B cell (primary cell): ENCODE measurements at regions of chr6 and their contacts with region 1.

Region 1: GRCh38 chr6:69866770-69867638 is 648 bp downstream of the COL19A1 start:
- DNase-seq: peak; percentile 92
- ATAC-seq: peak; percentile 78
- H3K4me3 ChIP-seq: peak overlapping the region; percentile 52 to 88 (median 78)
- H3K4me3 Mint-ChIP-seq: peak overlapping the region; percentile 93
- H3K27ac ChIP-seq: peak overlapping the region; percentile 91 to 96
- H3K27ac Mint-ChIP-seq: peak overlapping the region; percentile 95
- H3K4me1 ChIP-seq: peaks cover 36 to 55% of the 10 kb centered on the region in 2 donors
- H3K4me1 Mint-ChIP-seq: peaks cover 65% of the 10 kb centered on the region
- H3K27me3 ChIP-seq: no peaks in the 10 kb centered on the region
- H3K27me3 Mint-ChIP-seq: no peaks in the 10 kb centered on the region
- CTCF ChIP-seq: peak; percentile 65

Region 2: GRCh38 chr6:69732640-69733039 is 134.4 kb before region 1 on chr6:
- CTCF ChIA-PET with region 1: interaction called, 13 read pairs
- POLR2A ChIA-PET with region 1: no interaction called
- intact Hi-C with region 1: loop called (anchors 10 kb)
- DNase-seq: peak; percentile 44
- ATAC-seq: peak; percentile 45
- H3K4me3 ChIP-seq: no peak overlapping the region
- H3K4me3 Mint-ChIP-seq: no peak overlapping the region
- H3K27ac ChIP-seq: peak overlapping the region in 1 of 2 donors; percentile 34
- H3K27ac Mint-ChIP-seq: no peak overlapping the region
- H3K4me1 ChIP-seq: no peaks in the 10 kb centered on the region
- H3K4me1 Mint-ChIP-seq: peaks cover 16% of the 10 kb centered on the region
- H3K27me3 ChIP-seq: no peaks in the 10 kb centered on the region
- H3K27me3 Mint-ChIP-seq: no peaks in the 10 kb centered on the region
- CTCF ChIP-seq: peak; percentile 61

Region 3: DNA sequence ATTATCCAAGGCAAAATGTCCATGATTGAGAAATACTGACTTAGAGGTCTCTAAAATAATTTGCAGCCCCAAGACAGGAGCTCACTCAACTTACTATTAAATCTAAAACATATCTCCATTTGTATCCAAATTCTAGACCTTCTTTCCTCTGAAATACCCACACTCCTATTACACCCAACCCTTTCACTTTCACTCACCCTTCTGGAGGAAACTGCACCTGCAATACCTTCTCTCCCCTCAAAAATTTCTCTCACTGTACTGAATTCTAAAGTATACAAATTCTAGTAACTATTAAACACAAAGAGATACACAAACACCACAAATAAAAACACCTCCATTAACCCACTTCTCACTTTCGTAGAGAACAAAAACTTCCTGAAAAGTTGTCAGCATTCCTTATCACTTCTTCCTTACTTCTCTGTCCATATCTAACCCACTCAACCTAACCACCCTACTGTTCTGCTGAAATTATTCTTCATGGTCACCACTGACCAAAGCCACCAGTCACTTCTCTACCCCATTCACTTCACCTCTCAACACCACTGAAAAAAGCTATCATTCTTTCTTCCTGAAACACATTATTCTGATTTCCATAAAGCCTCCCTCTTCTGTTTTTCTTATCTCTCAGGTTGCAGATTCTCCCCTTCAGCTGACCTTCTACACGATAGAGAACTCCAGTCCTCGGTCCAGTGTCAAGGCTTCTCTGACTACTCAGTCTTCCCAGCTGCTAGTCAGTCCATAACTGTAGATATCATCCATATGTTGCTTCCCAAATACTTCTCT is 82.2 kb before region 1 on chr6:
- CTCF ChIA-PET with region 1: no interaction called
- POLR2A ChIA-PET with region 1: no interaction called
- intact Hi-C with region 1: no loop called
- DNase-seq: peak; percentile 40
- ATAC-seq: peak; percentile 58
- H3K4me3 ChIP-seq: peak overlapping the region in 1 of 5 experiments; percentile 15
- H3K4me3 Mint-ChIP-seq: peak overlapping the region; percentile 53
- H3K27ac ChIP-seq: peak overlapping the region in 1 of 2 donors; percentile 31
- H3K27ac Mint-ChIP-seq: peak overlapping the region; percentile 54
- H3K4me1 ChIP-seq: peaks cover 38 to 53% of the 10 kb centered on the region in 2 donors
- H3K4me1 Mint-ChIP-seq: peaks cover 55% of the 10 kb centered on the region
- H3K27me3 ChIP-seq: no peaks in the 10 kb centered on the region
- H3K27me3 Mint-ChIP-seq: no peaks in the 10 kb centered on the region
- CTCF ChIP-seq: peak; percentile 28

Region 4: DNA sequence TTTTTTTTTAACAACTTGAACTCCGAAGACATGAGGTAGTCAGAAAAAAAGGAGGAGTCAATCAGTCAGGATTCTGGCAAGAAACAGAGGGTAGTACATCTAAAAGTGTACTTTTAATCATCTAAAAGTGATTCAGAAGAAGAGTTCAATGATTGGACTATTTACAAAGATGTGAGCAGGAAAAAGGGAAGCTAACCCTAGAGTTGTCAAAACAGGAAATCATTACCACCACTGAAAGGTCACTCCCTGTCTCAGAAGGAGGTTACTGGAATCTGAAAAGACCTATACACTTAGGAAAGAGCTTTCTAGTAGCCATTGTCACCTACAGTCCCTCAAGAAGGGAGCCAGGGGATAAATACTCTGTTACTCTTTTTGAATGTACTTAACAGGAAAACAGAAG is 53.5 kb before region 1 on chr6:
- CTCF ChIA-PET with region 1: interaction called, 28 read pairs
- POLR2A ChIA-PET with region 1: interaction called, 7 read pairs
- intact Hi-C with region 1: loop called (anchors 2 kb)
- DNase-seq: peak; percentile 55
- ATAC-seq: peak; percentile 68
- H3K4me3 ChIP-seq: peak overlapping the region in 2 of 5 experiments; percentile 9 to 42
- H3K4me3 Mint-ChIP-seq: peak overlapping the region; percentile 64
- H3K27ac ChIP-seq: peak overlapping the region; percentile 85 to 89
- H3K27ac Mint-ChIP-seq: peak overlapping the region; percentile 85
- H3K4me1 ChIP-seq: peaks cover 51 to 62% of the 10 kb centered on the region in 2 donors
- H3K4me1 Mint-ChIP-seq: peaks cover 72% of the 10 kb centered on the region
- H3K27me3 ChIP-seq: no peaks in the 10 kb centered on the region
- H3K27me3 Mint-ChIP-seq: no peaks in the 10 kb centered on the region
- CTCF ChIP-seq: no peak

Region 5: GRCh38 chr6:69881322-69882151 is 14.5 kb after region 1 on chr6:
- CTCF ChIA-PET with region 1: interaction called, 66 read pairs
- POLR2A ChIA-PET with region 1: interaction called, 38 read pairs
- intact Hi-C with region 1: loop called (anchors 1 kb)
- DNase-seq: peak; percentile 88
- ATAC-seq: peak; percentile 87
- H3K4me3 ChIP-seq: peak overlapping the region; percentile 9 to 67 (median 28)
- H3K4me3 Mint-ChIP-seq: peak overlapping the region; percentile 84
- H3K27ac ChIP-seq: peak overlapping the region; percentile 99 to 100
- H3K27ac Mint-ChIP-seq: peak overlapping the region; percentile 95
- H3K4me1 ChIP-seq: peaks cover 56 to 81% of the 10 kb centered on the region in 2 donors
- H3K4me1 Mint-ChIP-seq: peaks cover 69% of the 10 kb centered on the region
- H3K27me3 ChIP-seq: no peaks in the 10 kb centered on the region
- H3K27me3 Mint-ChIP-seq: no peaks in the 10 kb centered on the region
- CTCF ChIP-seq: no peak

Region 6: GRCh38 chr6:69907981-69908498 is 41.0 kb after region 1 on chr6:
- CTCF ChIA-PET with region 1: interaction called, 10 read pairs
- POLR2A ChIA-PET with region 1: no interaction called
- intact Hi-C with region 1: loop called (anchors 2 kb)
- DNase-seq: no peak
- ATAC-seq: no peak
- H3K4me3 ChIP-seq: no peak overlapping the region
- H3K4me3 Mint-ChIP-seq: no peak overlapping the region
- H3K27ac ChIP-seq: peak overlapping the region in 1 of 2 donors; percentile 2
- H3K27ac Mint-ChIP-seq: peak overlapping the region; percentile 47
- H3K4me1 ChIP-seq: peaks cover 7 to 9% of the 10 kb centered on the region in 2 donors
- H3K4me1 Mint-ChIP-seq: peaks cover 13% of the 10 kb centered on the region
- H3K27me3 ChIP-seq: no peaks in the 10 kb centered on the region
- H3K27me3 Mint-ChIP-seq: no peaks in the 10 kb centered on the region
- CTCF ChIP-seq: no peak

Region 7: DNA sequence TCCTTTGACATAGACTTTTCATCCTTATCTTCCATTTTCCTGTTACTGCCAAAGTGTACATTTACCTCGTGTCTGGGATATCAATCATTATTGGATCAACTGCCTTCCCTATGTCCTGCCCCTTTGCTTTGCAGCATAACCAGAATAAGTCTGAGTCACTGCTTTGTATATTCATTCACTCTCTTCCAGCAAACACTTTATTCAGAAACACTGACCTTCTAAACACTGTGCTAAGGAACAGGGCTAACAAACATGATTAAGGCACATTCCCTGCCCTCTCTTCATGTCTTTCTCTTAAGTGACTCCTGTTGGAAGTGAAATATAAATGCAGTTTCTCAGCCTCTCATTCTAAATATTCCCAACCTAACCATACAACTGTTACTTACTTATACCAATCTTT is 66.2 kb after region 1 on chr6:
- CTCF ChIA-PET with region 1: interaction called, 3 read pairs
- POLR2A ChIA-PET with region 1: no interaction called
- intact Hi-C with region 1: loop called (anchors 5 kb)
- DNase-seq: no peak
- ATAC-seq: no peak
- H3K4me3 ChIP-seq: no peak overlapping the region
- H3K4me3 Mint-ChIP-seq: no peak overlapping the region
- H3K27ac ChIP-seq: peak overlapping the region in 1 of 2 donors; percentile 50
- H3K27ac Mint-ChIP-seq: peak overlapping the region; percentile 22
- H3K4me1 ChIP-seq: peaks cover 0 to 9% of the 10 kb centered on the region in 2 donors
- H3K4me1 Mint-ChIP-seq: peaks cover 18% of the 10 kb centered on the region
- H3K27me3 ChIP-seq: no peaks in the 10 kb centered on the region
- H3K27me3 Mint-ChIP-seq: no peaks in the 10 kb centered on the region
- CTCF ChIP-seq: no peak

Region 8: DNA sequence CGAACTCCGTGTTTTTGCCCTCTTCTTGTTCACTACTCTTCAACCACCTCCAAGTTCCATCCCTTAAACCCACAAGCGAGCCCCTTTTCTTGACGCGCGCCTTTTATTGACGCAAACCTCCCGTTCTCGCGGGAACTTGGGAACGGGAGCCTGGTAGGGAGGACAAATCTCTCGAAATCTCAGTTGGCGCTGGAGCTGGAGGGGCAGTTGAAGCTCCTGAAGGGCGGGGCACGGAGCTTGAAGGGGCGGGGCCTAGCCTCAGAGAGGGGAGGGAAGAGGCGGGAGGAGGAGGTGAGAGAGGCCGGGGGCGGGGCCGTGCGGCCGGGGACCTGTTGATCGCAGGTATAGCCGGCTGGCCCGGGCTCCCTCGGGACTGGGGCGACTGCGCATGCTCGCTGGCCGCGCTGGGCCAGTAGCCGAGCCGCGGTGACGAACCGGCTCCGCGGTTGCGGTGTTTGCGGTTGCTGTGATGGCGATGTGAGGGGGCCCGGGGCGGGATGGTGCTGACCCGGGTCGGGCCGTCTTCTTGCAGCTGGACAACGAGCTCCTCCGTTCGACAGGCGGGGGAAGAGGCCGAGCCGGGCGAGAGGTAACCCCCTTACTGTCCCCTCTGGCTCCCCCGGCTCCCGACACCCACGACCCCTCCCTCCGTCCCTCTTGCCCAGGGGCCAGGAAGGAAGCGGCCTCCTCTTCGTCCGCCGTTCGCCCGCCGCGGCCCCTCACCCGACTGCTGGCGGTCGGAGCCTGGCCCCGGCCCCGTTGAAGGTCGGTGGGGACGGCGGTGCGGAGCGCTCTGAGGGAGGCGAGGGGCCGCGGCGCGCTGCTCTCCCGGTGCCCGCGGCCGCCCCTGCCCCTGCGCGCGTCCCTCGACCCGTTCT is 546.3 kb after region 1 on chr6 and contains the start of gene FAM135A:
- CTCF ChIA-PET with region 1: no interaction called
- POLR2A ChIA-PET with region 1: no interaction called
- intact Hi-C with region 1: loop called (anchors 10 kb)
- DNase-seq: peak; percentile 97
- ATAC-seq: peak; percentile 98
- H3K4me3 ChIP-seq: peak within 1 kb of the TSS; percentile 71 to 88 (median 79)
- H3K4me3 Mint-ChIP-seq: peak within 1 kb of the TSS; percentile 97
- H3K27ac ChIP-seq: peak within 1 kb of the TSS; percentile 67 to 76
- H3K27ac Mint-ChIP-seq: peak within 1 kb of the TSS; percentile 87
- H3K4me1 ChIP-seq: peaks cover 7 to 17% of the 10 kb centered on the region in 2 donors
- H3K4me1 Mint-ChIP-seq: peaks cover 23% of the 10 kb centered on the region
- H3K27me3 ChIP-seq: no peaks in the 10 kb centered on the region
- H3K27me3 Mint-ChIP-seq: no peaks in the 10 kb centered on the region
- CTCF ChIP-seq: no peak
- total RNA-seq, gene FAM135A: 28.9 and 30.6 TPM in 2 replicates